ENCODE measurements at regions of chr16 and their contacts with region 1.

Region 1: GRCh38 chr16:88803264-88803987 is at the start of gene CDT1:
- DNase-seq: peak; percentile 73 to 96 (median 85)
- ATAC-seq: peak; percentile 85
- H3K4me3 ChIP-seq: peak within 1 kb of the TSS; percentile 68
- H3K4me3 Mint-ChIP-seq: peak within 1 kb of the TSS; percentile 82 to 90 (median 87)
- H3K27ac ChIP-seq: peak within 1 kb of the TSS; percentile 76
- H3K27ac Mint-ChIP-seq: peak within 1 kb of the TSS; percentile 77 to 90 (median 85)
- H3K4me1 ChIP-seq: peaks cover 10 to 15% of the 10 kb centered on the region in 2 donors
- H3K4me1 Mint-ChIP-seq: peaks cover 9 to 36% (median 20%) of the 10 kb centered on the region in 7 donors
- H3K27me3 ChIP-seq: no peaks in the 10 kb centered on the region
- H3K27me3 Mint-ChIP-seq: no peaks in the 10 kb centered on the region
- total RNA-seq, gene CDT1: 0.35 to 79.2 (median 1.6) TPM in 4 of 5 experiments, not detected in the other

Region 2: GRCh38 chr16:88497561-88498462 is 305.6 kb before region 1 on chr16:
- CTCF ChIA-PET with region 1: no interaction called
- POLR2A ChIA-PET with region 1: no interaction called
- intact Hi-C with region 1: no loop called
- DNase-seq: no peak
- ATAC-seq: no peak
- H3K4me3 ChIP-seq: no peak overlapping the region
- H3K4me3 Mint-ChIP-seq: no peak overlapping the region
- H3K27ac ChIP-seq: no peak overlapping the region
- H3K27ac Mint-ChIP-seq: no peak overlapping the region
- H3K4me1 ChIP-seq: no peaks in the 10 kb centered on the region
- H3K4me1 Mint-ChIP-seq: peaks cover 0 to 13% (median 4%) of the 10 kb centered on the region in 7 donors
- H3K27me3 ChIP-seq: no peaks in the 10 kb centered on the region
- H3K27me3 Mint-ChIP-seq: no peaks in the 10 kb centered on the region

Region 3: DNA sequence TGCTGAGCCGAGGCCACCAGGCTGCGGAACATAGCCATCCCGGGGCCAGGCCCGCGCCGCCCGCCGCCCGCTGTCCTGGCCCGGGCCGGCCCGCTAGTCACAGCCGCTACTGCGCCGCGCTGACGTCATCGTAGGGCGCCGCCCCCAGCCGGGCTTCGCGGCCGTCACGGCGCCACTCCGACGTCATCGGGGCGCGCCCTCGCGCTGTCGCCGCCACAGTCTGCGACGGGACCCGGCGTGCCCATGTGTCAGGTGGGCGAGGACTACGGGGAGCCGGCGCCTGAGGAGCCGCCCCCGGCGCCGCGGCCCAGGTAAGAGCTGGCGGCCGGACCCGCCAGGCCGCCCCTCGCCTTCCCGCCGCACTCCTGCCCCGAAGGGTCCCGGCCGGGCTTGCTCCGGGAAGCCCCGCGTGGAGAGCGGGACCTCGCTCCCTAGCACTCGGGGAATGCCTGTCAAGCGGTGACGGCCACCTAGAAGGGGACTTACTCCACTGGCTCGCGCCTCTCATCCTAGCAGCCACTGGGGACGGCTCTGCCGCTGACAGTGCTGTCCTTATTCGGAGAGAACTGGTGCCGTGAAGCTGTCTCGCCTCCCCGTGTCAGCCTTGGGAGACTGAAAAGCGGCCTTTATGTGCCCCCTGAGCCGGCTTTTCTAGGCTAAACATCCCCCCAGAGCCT is 97.0 kb before region 1 on chr16 and contains the starts of genes CTU2 and RNF166:
- CTCF ChIA-PET with region 1: no interaction called
- POLR2A ChIA-PET with region 1: interaction called, 9 read pairs
- intact Hi-C with region 1: loop called in 1 of 2 experiments (anchors 5 kb)
- DNase-seq: peak; percentile 86 to 98 (median 92)
- ATAC-seq: peak; percentile 84
- H3K4me3 ChIP-seq: peak within 1 kb of the TSS; percentile 79
- H3K4me3 Mint-ChIP-seq: peak within 1 kb of the TSS; percentile 78 to 98 (median 94)
- H3K27ac ChIP-seq: peak within 1 kb of the TSS; percentile 88
- H3K27ac Mint-ChIP-seq: peak within 1 kb of the TSS; percentile 85 to 98 (median 97)
- H3K4me1 ChIP-seq: peaks cover 25 to 40% of the 10 kb centered on the region in 2 donors
- H3K4me1 Mint-ChIP-seq: peaks cover 31 to 45% (median 41%) of the 10 kb centered on the region in 7 donors
- H3K27me3 ChIP-seq: no peaks in the 10 kb centered on the region
- H3K27me3 Mint-ChIP-seq: no peaks in the 10 kb centered on the region
- total RNA-seq, gene CTU2: 26.0 to 43.3 (median 28.3) TPM
- total RNA-seq, gene RNF166: 99.8 to 324 (median 133) TPM

Region 4: GRCh38 chr16:88838991-88839529 is 35.6 kb after region 1 on chr16:
- CTCF ChIA-PET with region 1: no interaction called
- POLR2A ChIA-PET with region 1: no interaction called
- intact Hi-C with region 1: no loop called
- DNase-seq: no peak
- ATAC-seq: no peak
- H3K4me3 ChIP-seq: no peak overlapping the region
- H3K4me3 Mint-ChIP-seq: no peak overlapping the region
- H3K27ac ChIP-seq: no peak overlapping the region
- H3K27ac Mint-ChIP-seq: no peak overlapping the region
- H3K4me1 ChIP-seq: no peaks in the 10 kb centered on the region
- H3K4me1 Mint-ChIP-seq: peaks cover 0 to 1% (median 0%) of the 10 kb centered on the region in 7 donors
- H3K27me3 ChIP-seq: no peaks in the 10 kb centered on the region
- H3K27me3 Mint-ChIP-seq: no peaks in the 10 kb centered on the region

Measured in naive thymus-derived CD4-positive, alpha-beta T cell (primary cell).